Activated CD8-positive, alpha-beta T cell treated with anti-CD3 and anti-CD28 coated beads, Interleukin-2, amount 10 ng/mL, durations not matched to agents 7 days and 5 days (primary cell): ENCODE measurements at regions of chr6 and their contacts with region 1.

Region 1: DNA sequence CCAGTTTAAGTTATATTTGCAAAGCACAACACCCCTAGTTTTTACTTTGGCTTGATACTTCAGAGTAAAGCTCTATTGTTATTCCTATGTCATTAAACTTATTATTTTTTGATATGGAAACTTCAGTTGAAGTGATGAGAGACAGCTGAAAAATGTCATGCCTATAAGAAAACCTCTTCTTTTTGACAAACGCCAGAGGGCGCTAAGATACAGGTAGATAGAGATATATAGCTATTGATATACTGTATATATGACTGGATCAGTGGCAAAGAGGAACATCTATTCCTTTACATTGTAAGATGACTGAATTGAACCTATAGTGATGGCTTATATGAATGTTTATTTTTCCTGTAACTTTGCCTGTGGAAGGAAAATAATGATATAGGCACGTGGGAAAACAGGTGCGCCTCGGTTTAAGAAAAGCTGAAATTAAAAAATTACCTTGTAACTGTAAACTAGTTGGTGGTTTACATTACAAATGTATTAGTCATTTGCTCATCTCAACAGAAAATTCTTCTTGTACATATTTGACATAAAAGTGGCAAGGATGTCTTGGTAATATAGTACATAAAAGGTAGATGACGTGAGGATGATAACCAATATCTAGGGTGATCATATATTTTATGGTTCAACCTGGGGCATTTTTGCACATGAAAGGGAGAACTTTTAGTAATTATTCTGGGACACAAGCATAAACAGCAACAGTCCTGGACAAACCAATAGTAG is 74.1 kb downstream of the LAMA4 start:
- DNase-seq: peak; percentile 75
- ATAC-seq: peak; percentile 79
- H3K4me3 Mint-ChIP-seq: no peak overlapping the region
- H3K27ac Mint-ChIP-seq: no peak overlapping the region
- H3K4me1 Mint-ChIP-seq: no peaks in the 10 kb centered on the region
- H3K27me3 Mint-ChIP-seq: peaks cover 45% of the 10 kb centered on the region

Region 2: GRCh38 chr6:112163295-112164257 is 16.7 kb before region 1 on chr6:
- CTCF ChIA-PET with region 1: interaction called, 34 read pairs
- POLR2A ChIA-PET with region 1: no interaction called
- DNase-seq: peak; percentile 84
- ATAC-seq: peak; percentile 99
- H3K4me3 Mint-ChIP-seq: peak overlapping the region; percentile 56
- H3K27ac Mint-ChIP-seq: no peak overlapping the region
- H3K4me1 Mint-ChIP-seq: peaks cover 17% of the 10 kb centered on the region
- H3K27me3 Mint-ChIP-seq: peaks cover 49% of the 10 kb centered on the region

Region 3: GRCh38 chr6:112266331-112266730 is 86.1 kb after region 1 on chr6:
- CTCF ChIA-PET with region 1: no interaction called
- POLR2A ChIA-PET with region 1: no interaction called
- DNase-seq: peak; percentile 1
- ATAC-seq: no peak
- H3K4me3 Mint-ChIP-seq: no peak overlapping the region
- H3K27ac Mint-ChIP-seq: no peak overlapping the region
- H3K4me1 Mint-ChIP-seq: no peaks in the 10 kb centered on the region
- H3K27me3 Mint-ChIP-seq: peaks cover 33% of the 10 kb centered on the region

Region 4: GRCh38 chr6:112286010-112286409 is 105.8 kb after region 1 on chr6:
- CTCF ChIA-PET with region 1: interaction called, 10 read pairs
- POLR2A ChIA-PET with region 1: no interaction called
- DNase-seq: peak; percentile 88
- ATAC-seq: peak; percentile 94
- H3K4me3 Mint-ChIP-seq: peak overlapping the region; percentile 19
- H3K27ac Mint-ChIP-seq: peak overlapping the region; percentile 36
- H3K4me1 Mint-ChIP-seq: peaks cover 29% of the 10 kb centered on the region
- H3K27me3 Mint-ChIP-seq: peaks cover 58% of the 10 kb centered on the region

Region 5: GRCh38 chr6:112321941-112322424 is 141.7 kb after region 1 on chr6:
- CTCF ChIA-PET with region 1: interaction called, 19 read pairs
- POLR2A ChIA-PET with region 1: no interaction called
- DNase-seq: no peak
- ATAC-seq: no peak
- H3K4me3 Mint-ChIP-seq: no peak overlapping the region
- H3K27ac Mint-ChIP-seq: no peak overlapping the region
- H3K4me1 Mint-ChIP-seq: no peaks in the 10 kb centered on the region
- H3K27me3 Mint-ChIP-seq: peaks cover 25% of the 10 kb centered on the region

Region 6: DNA sequence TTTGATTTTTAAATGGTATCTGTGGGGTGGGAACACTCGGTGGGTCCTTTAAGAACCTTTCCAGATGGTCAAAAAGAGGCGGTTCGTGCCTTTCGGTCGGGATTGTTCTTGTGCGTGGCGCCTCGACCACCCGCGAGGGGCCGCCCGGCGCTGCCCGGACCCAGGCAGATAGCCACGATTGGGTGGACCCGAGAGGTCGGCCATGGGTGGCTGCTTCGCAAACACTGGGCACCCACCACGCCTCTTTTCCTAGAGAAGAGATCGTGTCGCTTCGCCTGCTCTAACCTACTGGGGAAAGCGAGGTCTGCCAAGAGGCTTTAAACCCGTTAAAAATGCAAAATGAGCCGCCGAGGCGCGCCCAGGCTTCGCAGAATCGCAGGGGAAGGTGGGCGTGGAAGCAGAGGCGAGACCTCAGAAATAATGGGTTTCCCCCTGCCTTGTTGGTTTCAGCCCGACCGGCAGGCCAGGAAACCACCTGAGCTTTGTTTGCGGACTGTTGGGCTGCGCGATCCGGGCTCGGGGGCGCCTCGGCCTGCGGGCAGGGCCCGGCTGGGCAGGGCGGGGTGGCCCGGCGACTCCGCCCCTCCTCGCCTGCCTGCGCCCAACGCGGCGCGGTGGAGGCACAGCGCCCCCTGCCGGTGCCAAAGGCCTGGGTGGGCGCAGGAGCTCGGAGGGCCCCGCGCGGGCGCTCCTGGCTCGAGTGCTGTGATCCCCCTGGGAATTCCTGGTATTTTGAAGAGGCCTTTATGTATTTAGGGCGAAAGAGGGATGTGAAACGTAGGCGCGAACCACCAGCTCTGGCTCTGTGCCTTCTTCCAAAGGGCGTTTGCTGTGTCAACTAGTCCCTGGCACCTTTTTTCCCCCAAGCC is 1678.5 kb after region 1 on chr6:
- CTCF ChIA-PET with region 1: interaction called, 17 read pairs
- POLR2A ChIA-PET with region 1: no interaction called
- DNase-seq: peak; percentile 80
- ATAC-seq: peak; percentile 96
- H3K4me3 Mint-ChIP-seq: peak overlapping the region; percentile 18
- H3K27ac Mint-ChIP-seq: no peak overlapping the region
- H3K4me1 Mint-ChIP-seq: peaks cover 18% of the 10 kb centered on the region
- H3K27me3 Mint-ChIP-seq: peaks cover 30% of the 10 kb centered on the region